MCF 10A (cell line): ENCODE measurements at regions of chr2 and their contacts with region 1.

Region 1: GRCh38 chr2:24827321-24828237 is 34.4 kb downstream of the CENPO start:
- DNase-seq: peak; percentile 73
- H3K4me3 Mint-ChIP-seq: no peak overlapping the region
- H3K27ac Mint-ChIP-seq: no peak overlapping the region
- H3K4me1 Mint-ChIP-seq: no peaks in the 10 kb centered on the region
- H3K27me3 Mint-ChIP-seq: no peaks in the 10 kb centered on the region
- CTCF ChIP-seq: peak; percentile 58

Region 2: GRCh38 chr2:24228470-24228869 is 599.1 kb before region 1 on chr2:
- CTCF ChIA-PET with region 1: interaction called, 3 read pairs
- POLR2A ChIA-PET with region 1: no interaction called
- intact Hi-C with region 1: loop called (anchors 10 kb)
- DNase-seq: peak; percentile 23
- H3K4me3 Mint-ChIP-seq: no peak overlapping the region
- H3K27ac Mint-ChIP-seq: no peak overlapping the region
- H3K4me1 Mint-ChIP-seq: no peaks in the 10 kb centered on the region
- H3K27me3 Mint-ChIP-seq: no peaks in the 10 kb centered on the region
- CTCF ChIP-seq: peak; percentile 33

Region 3: GRCh38 chr2:24421668-24422067 is 405.9 kb before region 1 on chr2:
- CTCF ChIA-PET with region 1: interaction called, 3 read pairs
- POLR2A ChIA-PET with region 1: no interaction called
- intact Hi-C with region 1: loop called (anchors 1 kb)
- DNase-seq: peak; percentile 75
- H3K4me3 Mint-ChIP-seq: no peak overlapping the region
- H3K27ac Mint-ChIP-seq: no peak overlapping the region
- H3K4me1 Mint-ChIP-seq: no peaks in the 10 kb centered on the region
- H3K27me3 Mint-ChIP-seq: no peaks in the 10 kb centered on the region
- CTCF ChIP-seq: peak; percentile 39

Region 4: DNA sequence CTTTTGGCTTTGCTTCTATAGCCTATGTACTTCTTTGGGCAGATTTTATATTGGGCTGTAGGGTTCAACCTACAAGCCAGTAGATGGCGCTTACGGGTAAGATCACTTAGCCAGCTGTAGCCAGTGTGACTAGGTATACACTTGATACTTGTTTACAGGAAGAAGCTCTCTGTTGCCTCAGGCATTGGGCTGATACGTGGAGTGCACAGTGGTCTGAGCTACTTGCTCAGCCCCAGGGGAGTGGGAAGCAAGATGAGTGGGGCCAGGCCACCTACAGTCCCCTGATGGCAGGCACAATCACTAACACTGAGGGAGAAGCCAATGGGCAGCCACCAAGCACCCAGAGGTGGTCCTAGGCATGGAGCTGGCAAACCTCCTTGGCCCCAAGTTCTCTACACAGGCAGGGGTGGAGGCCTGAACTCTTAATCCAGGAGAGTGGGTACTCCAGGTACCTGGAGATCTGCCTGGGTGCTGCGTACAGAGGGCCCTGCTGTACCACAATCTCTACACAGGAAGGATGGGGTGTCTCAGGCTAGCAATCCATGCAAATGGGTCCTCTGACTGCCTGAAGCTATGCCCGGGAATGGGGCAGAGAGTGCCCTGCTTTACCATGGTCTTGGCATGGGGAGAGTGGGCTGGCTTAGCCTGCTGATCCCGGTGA is 214.3 kb before region 1 on chr2:
- CTCF ChIA-PET with region 1: no interaction called
- POLR2A ChIA-PET with region 1: no interaction called
- intact Hi-C with region 1: loop called (anchors 1 kb)
- DNase-seq: peak; percentile 66
- H3K4me3 Mint-ChIP-seq: no peak overlapping the region
- H3K27ac Mint-ChIP-seq: no peak overlapping the region
- H3K4me1 Mint-ChIP-seq: peaks cover 8% of the 10 kb centered on the region
- H3K27me3 Mint-ChIP-seq: no peaks in the 10 kb centered on the region
- CTCF ChIP-seq: no peak